ENCODE measurements at regions of chr11 and their contacts with region 1.

Region 1: GRCh38 chr11:74739546-74740270 is 8.5 kb upstream of the CHRDL2 start:
- DNase-seq: peak; percentile 64
- H3K4me3 ChIP-seq: no peak overlapping the region
- H3K27ac ChIP-seq: no peak overlapping the region
- H3K4me1 ChIP-seq: no peaks in the 10 kb centered on the region
- H3K27me3 ChIP-seq: peaks cover 11 to 17% of the 10 kb centered on the region in 2 experiments
- CTCF ChIP-seq: peak; percentile 87 to 89
- POLR2A ChIP-seq: no peak

Region 2: GRCh38 chr11:74520927-74521665 is 218.6 kb before region 1 on chr11:
- CTCF ChIA-PET with region 1: no interaction called
- POLR2A ChIA-PET with region 1: no interaction called
- dilution Hi-C with region 1: no loop called
- intact Hi-C with region 1: no loop called
- DNase-seq: peak; percentile 43
- H3K4me3 ChIP-seq: no peak overlapping the region
- H3K27ac ChIP-seq: no peak overlapping the region
- H3K4me1 ChIP-seq: peaks cover 10% of the 10 kb centered on the region
- H3K27me3 ChIP-seq: peaks cover 8 to 15% of the 10 kb centered on the region in 2 experiments
- CTCF ChIP-seq: no peak
- POLR2A ChIP-seq: no peak

Region 3: DNA sequence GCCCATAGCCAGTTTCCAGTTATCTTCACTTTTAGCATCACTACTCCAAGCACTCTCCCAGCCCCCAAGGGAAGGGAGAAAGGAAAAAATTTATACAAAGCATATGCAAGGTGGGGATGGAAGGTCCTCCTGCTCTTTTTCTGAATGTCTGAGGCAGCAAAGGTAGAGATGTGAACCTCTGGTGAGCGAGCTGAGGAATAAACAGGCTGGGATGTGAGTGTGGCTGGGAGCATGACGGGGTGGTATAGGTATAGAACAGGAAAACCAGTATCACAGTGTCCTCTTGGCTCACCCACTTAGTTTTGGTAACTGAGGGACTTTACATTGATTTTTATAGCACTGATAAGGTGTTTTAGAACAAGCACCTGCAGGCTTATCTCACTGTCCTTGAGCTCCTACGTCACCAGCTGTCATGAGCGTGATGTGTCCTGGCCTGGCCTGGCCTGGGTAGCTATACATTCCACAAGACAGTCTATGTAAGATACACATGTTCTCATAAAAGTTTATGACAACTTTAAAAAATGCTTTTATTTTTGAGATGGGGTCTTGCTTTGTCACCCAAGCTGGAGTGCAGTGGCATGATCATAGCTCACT is 157.7 kb before region 1 on chr11:
- CTCF ChIA-PET with region 1: no interaction called
- POLR2A ChIA-PET with region 1: no interaction called
- dilution Hi-C with region 1: no loop called
- intact Hi-C with region 1: no loop called
- DNase-seq: no peak
- H3K4me3 ChIP-seq: no peak overlapping the region
- H3K27ac ChIP-seq: no peak overlapping the region
- H3K4me1 ChIP-seq: no peaks in the 10 kb centered on the region
- H3K27me3 ChIP-seq: peaks cover 0 to 6% of the 10 kb centered on the region in 2 experiments
- CTCF ChIP-seq: no peak
- POLR2A ChIP-seq: no peak

Region 4: DNA sequence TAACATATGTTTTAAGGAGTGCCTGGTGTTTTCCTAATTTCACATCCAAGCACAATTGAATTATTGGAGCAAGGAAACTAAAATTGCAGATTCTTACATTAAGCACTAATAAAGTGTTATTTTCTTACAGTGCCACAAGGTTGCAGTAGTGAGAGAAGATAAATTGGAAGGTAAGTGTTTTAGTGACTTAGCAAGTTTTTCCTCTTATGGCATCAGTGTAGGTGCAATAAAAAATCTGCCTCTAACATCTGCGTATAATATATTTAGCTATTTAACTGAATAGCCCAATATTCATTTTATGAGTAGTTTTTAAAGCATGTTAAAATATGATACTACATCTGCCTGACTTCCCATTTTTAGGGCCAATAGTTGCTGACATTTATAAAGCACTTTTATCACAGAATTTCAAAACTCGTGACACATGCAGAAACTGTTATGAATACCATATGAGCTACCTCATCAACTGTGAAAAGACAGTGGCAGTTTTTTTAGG is 128.3 kb before region 1 on chr11:
- CTCF ChIA-PET with region 1: interaction called, 39 read pairs
- POLR2A ChIA-PET with region 1: no interaction called
- dilution Hi-C with region 1: no loop called
- intact Hi-C with region 1: no loop called
- DNase-seq: peak; percentile 46
- H3K4me3 ChIP-seq: no peak overlapping the region
- H3K27ac ChIP-seq: no peak overlapping the region
- H3K4me1 ChIP-seq: no peaks in the 10 kb centered on the region
- H3K27me3 ChIP-seq: no peaks in the 10 kb centered on the region
- CTCF ChIP-seq: peak in 1 of 2 donors; percentile 26
- POLR2A ChIP-seq: no peak

Region 5: DNA sequence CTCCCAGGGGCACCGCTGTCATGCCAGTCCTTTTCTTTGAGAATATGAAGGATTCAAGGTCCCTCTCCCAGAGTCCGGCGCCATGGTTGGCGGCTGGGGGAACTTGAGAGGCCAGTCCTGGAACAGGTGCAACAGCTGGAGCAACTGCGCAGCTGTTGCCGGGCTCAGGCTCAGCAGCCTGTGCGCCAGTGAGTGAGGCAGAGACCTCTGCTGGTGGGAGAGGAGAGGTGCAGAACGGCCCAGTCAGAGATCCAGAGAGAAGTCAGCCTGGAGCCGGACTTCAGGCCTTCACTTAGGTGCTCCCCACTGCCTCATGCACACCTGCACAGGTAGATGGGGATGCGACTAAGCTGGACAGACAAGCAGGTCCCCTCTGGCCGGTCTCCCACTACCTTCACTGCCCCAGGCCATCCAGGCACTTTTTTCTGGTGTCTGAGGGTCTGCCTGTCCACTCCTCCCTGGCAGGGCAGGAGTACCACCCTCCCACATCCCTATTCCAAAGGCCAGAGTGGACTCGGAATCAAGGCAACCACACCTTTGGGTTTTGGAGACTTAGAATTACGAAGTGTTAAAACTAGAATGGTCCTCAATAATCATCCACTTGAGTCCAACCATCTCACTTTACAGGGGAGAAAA is 13.0 kb before region 1 on chr11:
- CTCF ChIA-PET with region 1: interaction called, 91 read pairs
- POLR2A ChIA-PET with region 1: no interaction called
- dilution Hi-C with region 1: no loop called
- intact Hi-C with region 1: no loop called
- DNase-seq: peak; percentile 60
- H3K4me3 ChIP-seq: no peak overlapping the region
- H3K27ac ChIP-seq: no peak overlapping the region
- H3K4me1 ChIP-seq: no peaks in the 10 kb centered on the region
- H3K27me3 ChIP-seq: peaks cover 61 to 66% of the 10 kb centered on the region in 2 experiments
- CTCF ChIP-seq: peak; percentile 80 to 97
- POLR2A ChIP-seq: no peak

Region 6: GRCh38 chr11:74754507-74755255 is 15.0 kb after region 1 on chr11:
- CTCF ChIA-PET with region 1: interaction called, 26 read pairs
- POLR2A ChIA-PET with region 1: no interaction called
- dilution Hi-C with region 1: no loop called
- intact Hi-C with region 1: no loop called
- DNase-seq: peak; percentile 92
- H3K4me3 ChIP-seq: peak overlapping the region in 2 of 3 experiments; percentile 14 to 64
- H3K27ac ChIP-seq: peak overlapping the region; percentile 86
- H3K4me1 ChIP-seq: peaks cover 46% of the 10 kb centered on the region
- H3K27me3 ChIP-seq: no peaks in the 10 kb centered on the region
- CTCF ChIP-seq: no peak
- POLR2A ChIP-seq: peak; percentile 53

Region 7: GRCh38 chr11:74806267-74806666 is 66.6 kb after region 1 on chr11:
- CTCF ChIA-PET with region 1: interaction called, 12 read pairs
- POLR2A ChIA-PET with region 1: no interaction called
- dilution Hi-C with region 1: no loop called
- intact Hi-C with region 1: no loop called
- DNase-seq: no peak
- H3K4me3 ChIP-seq: no peak overlapping the region
- H3K27ac ChIP-seq: no peak overlapping the region
- H3K4me1 ChIP-seq: no peaks in the 10 kb centered on the region
- H3K27me3 ChIP-seq: no peaks in the 10 kb centered on the region
- CTCF ChIP-seq: no peak
- POLR2A ChIP-seq: no peak

Region 8: DNA sequence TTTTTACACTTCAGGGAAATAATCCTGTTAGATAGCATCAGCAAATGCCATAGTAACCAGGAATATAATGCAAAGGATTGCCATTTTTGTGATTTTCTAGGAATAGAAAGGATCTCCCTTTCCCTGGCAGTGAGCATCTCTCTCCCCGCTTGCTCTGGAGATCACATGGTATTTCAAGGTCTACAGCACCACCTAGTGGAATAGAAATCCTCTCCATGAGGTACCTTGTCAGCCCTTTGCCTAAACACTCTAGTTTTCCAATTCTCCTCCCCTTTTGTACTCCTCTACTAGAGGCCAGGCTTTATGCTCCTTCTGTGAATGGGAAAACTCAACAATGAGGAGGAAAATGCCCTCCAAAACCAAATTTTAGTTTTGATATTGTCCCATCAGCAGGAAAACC is 130.8 kb after region 1 on chr11:
- CTCF ChIA-PET with region 1: interaction called, 19 read pairs
- POLR2A ChIA-PET with region 1: no interaction called
- dilution Hi-C with region 1: no loop called
- intact Hi-C with region 1: no loop called
- DNase-seq: peak; percentile 49
- H3K4me3 ChIP-seq: no peak overlapping the region
- H3K27ac ChIP-seq: no peak overlapping the region
- H3K4me1 ChIP-seq: no peaks in the 10 kb centered on the region
- H3K27me3 ChIP-seq: no peaks in the 10 kb centered on the region
- CTCF ChIP-seq: peak; percentile 39 to 45
- POLR2A ChIP-seq: no peak